ENCODE measurements at regions of chr3 and their contacts with region 1.

Region 1: GRCh38 chr3:32510075-32510724 is 7.5 kb upstream of the CMTM6 start:
- DNase-seq: no peak
- ATAC-seq: peak; percentile 91
- H3K4me3 ChIP-seq: no peak overlapping the region
- H3K27ac ChIP-seq: no peak overlapping the region
- H3K4me1 ChIP-seq: no peaks in the 10 kb centered on the region
- H3K27me3 ChIP-seq: no peaks in the 10 kb centered on the region
- CTCF ChIP-seq: peak; percentile 75

Region 2: GRCh38 chr3:32662647-32663046 is 152.4 kb after region 1 on chr3:
- intact Hi-C with region 1: loop called (anchors 5 kb)
- DNase-seq: no peak
- ATAC-seq: peak in 1 of 2 donors; percentile 40
- H3K4me3 ChIP-seq: no peak overlapping the region
- H3K27ac ChIP-seq: no peak overlapping the region
- H3K4me1 ChIP-seq: no peaks in the 10 kb centered on the region
- H3K27me3 ChIP-seq: no peaks in the 10 kb centered on the region
- CTCF ChIP-seq: no peak

Measured in lower lobe of right lung (tissue), 2 donors.